ENCODE measurements at regions of chr12 and their contacts with region 1.

Region 1: DNA sequence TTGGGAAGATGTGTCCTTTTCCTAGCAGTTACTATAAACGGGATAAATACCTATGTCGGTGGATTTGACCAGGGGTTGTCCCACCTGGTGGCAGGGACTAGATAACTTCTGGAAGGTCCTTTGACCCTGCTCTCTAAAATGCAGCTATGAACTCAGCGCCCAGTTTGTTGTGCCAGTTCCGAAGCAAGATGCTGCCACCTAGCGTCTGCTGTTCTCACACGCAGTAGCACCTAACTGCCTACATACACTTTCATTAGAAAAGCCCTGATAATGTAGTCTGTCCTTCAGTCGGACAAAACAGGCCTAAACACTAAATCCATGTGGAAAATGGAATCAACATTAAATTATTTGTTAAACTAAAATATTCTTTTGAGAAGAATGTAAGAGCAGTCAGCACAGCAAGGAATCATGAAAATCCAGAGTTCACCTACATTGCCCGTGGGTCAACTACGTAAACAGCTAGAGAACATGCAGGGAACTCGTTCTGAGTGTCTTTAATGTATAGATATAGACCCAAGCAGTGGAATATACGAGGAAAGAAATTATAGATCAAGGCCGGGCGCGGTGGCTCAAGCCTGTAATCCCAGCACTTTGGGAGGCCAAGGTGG is 51.1 kb upstream of the CRACR2A start:
- DNase-seq: peak; percentile 28
- ATAC-seq: peak; percentile 52
- H3K4me3 Mint-ChIP-seq: no peak overlapping the region
- H3K27ac Mint-ChIP-seq: no peak overlapping the region
- H3K4me1 Mint-ChIP-seq: no peaks in the 10 kb centered on the region
- H3K27me3 Mint-ChIP-seq: no peaks in the 10 kb centered on the region
- CTCF ChIP-seq: no peak

Region 2: GRCh38 chr12:3135522-3136461 is 668.2 kb before region 1 on chr12:
- CTCF ChIA-PET with region 1: no interaction called
- POLR2A ChIA-PET with region 1: no interaction called
- intact Hi-C with region 1: loop called (anchors 2 kb)
- DNase-seq: no peak
- ATAC-seq: peak; percentile 66
- H3K4me3 Mint-ChIP-seq: no peak overlapping the region
- H3K27ac Mint-ChIP-seq: no peak overlapping the region
- H3K4me1 Mint-ChIP-seq: no peaks in the 10 kb centered on the region
- H3K27me3 Mint-ChIP-seq: peaks cover 46% of the 10 kb centered on the region
- CTCF ChIP-seq: peak; percentile 74

Region 3: DNA sequence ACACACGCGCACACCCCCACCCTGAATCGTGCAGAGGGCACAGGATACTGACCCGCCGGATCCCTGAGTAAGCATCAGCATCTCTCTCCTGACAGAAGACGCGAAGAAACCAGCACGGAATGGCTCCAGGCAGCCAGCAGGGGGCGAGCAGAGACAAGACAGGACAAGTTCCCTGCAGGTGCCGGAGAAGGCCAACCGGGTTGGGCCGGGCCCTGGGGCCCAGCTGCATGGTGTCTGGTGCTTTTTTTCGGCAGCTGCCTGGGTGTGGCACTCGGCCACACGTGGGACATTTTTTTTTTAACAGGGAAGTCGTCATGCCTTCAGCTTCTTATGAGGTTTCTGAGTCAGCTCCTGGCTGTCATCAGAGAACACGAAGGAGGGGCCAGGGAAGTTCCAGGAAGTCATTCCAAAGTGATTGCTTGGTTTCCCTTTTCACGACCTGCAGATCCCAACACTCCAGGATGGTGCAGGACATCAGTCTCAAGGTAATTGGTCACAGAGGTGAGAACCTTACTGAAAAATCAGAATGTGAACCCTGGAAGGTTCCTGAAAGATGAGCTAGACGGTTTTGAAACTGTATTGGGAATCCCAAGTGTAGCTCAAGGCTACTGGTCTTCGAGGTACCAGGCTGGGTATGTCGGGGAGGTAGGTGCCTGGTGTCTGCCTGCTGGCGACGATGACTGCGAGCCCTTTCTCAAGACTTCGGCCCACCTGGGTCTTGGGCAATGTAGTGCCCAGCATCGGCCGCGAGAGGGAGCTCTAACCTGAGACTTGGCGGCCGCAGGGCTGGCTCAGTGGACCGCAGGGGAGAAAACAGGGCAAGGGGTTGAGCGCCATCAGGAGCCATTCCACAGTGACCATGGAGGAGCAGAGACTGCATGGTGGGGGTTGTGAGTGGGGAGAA is 503.8 kb before region 1 on chr12:
- CTCF ChIA-PET with region 1: interaction called, 106 read pairs
- POLR2A ChIA-PET with region 1: interaction called, 4 read pairs
- intact Hi-C with region 1: loop called (anchors 1 kb)
- DNase-seq: peak; percentile 63
- ATAC-seq: peak; percentile 85
- H3K4me3 Mint-ChIP-seq: peak overlapping the region; percentile 74
- H3K27ac Mint-ChIP-seq: peak overlapping the region; percentile 73
- H3K4me1 Mint-ChIP-seq: peaks cover 11% of the 10 kb centered on the region
- H3K27me3 Mint-ChIP-seq: peaks cover 25% of the 10 kb centered on the region
- CTCF ChIP-seq: peak; percentile 37

Region 4: GRCh38 chr12:3313675-3314663 is 490.0 kb before region 1 on chr12:
- CTCF ChIA-PET with region 1: interaction called, 14 read pairs
- POLR2A ChIA-PET with region 1: no interaction called
- intact Hi-C with region 1: loop called (anchors 1 kb)
- DNase-seq: no peak
- ATAC-seq: peak; percentile 58
- H3K4me3 Mint-ChIP-seq: no peak overlapping the region
- H3K27ac Mint-ChIP-seq: no peak overlapping the region
- H3K4me1 Mint-ChIP-seq: no peaks in the 10 kb centered on the region
- H3K27me3 Mint-ChIP-seq: peaks cover 8% of the 10 kb centered on the region
- CTCF ChIP-seq: no peak

Region 5: DNA sequence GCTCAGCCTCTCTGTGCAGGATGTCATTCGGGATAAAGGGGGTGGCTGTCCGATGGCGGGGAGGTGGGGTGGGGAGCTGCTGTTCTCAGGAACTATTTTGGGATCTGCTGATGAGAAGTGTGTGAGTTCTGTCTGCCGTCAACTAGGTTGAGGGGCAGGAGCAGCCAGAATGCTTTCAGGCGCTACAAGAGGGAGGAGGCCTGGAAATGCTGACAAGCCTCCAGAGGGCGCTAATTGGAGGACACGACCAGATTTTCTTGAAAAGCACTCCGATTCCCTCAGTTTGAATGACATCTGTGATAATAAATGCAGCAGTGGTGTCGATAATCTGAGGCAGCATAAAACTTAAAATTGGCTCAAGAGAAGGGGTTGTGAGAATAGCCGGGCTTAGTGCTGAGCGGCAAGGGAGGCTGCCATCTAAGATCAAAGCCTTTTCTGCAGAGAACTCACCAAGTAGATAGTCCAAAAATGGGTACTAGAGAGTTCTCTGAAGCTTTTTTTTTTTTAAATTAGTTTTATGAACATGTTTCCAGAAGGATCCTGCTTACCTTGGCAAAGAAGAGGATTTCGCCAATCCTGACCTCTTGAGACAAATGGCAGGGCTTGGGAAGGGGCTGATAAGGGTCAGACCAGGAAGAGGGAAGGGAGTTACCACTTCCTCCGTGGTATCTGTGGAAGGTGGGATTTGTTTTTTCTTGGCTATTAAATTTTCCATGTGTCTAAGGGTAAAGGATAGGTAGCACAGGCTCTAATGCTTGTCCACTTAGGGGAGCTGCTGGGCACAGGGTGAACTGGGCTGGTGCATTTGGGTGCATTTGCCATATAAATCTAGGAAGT is 145.4 kb before region 1 on chr12:
- CTCF ChIA-PET with region 1: interaction called, 5 read pairs
- POLR2A ChIA-PET with region 1: no interaction called
- intact Hi-C with region 1: loop called (anchors 1 kb)
- DNase-seq: no peak
- ATAC-seq: no peak
- H3K4me3 Mint-ChIP-seq: no peak overlapping the region
- H3K27ac Mint-ChIP-seq: no peak overlapping the region
- H3K4me1 Mint-ChIP-seq: no peaks in the 10 kb centered on the region
- H3K27me3 Mint-ChIP-seq: no peaks in the 10 kb centered on the region
- CTCF ChIP-seq: no peak

Region 6: DNA sequence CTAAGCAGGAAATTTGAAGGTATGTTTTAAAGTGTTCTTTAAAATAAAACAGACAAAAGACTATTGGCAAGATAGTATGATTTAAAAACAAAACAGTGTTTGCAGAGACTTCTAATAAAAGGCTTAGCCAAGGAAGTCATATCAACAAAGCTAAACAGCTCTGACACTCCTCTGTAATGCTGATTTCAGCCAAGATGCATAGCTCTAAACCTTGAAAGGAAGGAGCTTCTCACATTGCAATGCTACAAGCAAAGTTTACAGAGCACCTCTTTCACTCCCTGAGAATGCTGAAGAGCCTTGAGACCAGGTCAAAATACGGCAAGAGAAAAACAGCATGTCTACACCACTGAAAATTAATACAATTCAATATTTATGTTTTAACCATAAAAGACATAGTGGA is 17.5 kb after region 1 on chr12:
- CTCF ChIA-PET with region 1: no interaction called
- POLR2A ChIA-PET with region 1: no interaction called
- intact Hi-C with region 1: no loop called
- DNase-seq: no peak
- ATAC-seq: no peak
- H3K4me3 Mint-ChIP-seq: no peak overlapping the region
- H3K27ac Mint-ChIP-seq: no peak overlapping the region
- H3K4me1 Mint-ChIP-seq: peaks cover under 1% of the 10 kb centered on the region
- H3K27me3 Mint-ChIP-seq: no peaks in the 10 kb centered on the region
- CTCF ChIP-seq: no peak